ENCODE measurements at regions of chr14 and their contacts with region 1.

Region 1: GRCh38 chr14:93219103-93219726 is 12.2 kb downstream of the UBR7 start:
- DNase-seq: peak; percentile 51
- ATAC-seq: peak; percentile 88
- H3K4me3 ChIP-seq: no peak overlapping the region
- H3K27ac ChIP-seq: no peak overlapping the region
- H3K4me1 ChIP-seq: no peaks in the 10 kb centered on the region
- H3K27me3 ChIP-seq: no peaks in the 10 kb centered on the region
- CTCF ChIP-seq: peak; percentile 66 to 79 (median 74)
- POLR2A ChIP-seq: no peak
- RAD21 ChIP-seq: peak; percentile 77

Region 2: DNA sequence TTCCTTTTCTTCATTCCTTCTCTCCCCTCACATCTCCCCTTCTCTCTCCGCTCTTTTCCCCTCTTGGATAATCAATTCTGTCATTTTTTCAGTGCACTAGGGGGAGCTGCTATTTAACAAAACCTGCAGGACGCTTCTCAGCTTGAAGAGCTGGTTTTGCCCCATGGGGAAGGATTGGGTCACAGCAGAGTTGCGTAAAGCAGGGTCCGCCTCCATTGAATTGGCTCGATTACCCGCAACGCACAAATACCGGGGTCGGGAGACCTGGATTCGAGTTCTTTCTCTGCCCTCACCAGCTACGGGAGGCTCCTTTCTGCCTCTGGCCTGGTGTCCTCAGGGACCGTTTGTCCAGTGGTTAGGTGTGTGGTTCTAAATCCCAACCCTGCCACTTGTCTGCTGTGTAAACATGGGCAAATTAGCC is 338.3 kb before region 1 on chr14:
- CTCF ChIA-PET with region 1: interaction called, 5 read pairs
- POLR2A ChIA-PET with region 1: no interaction called
- RAD21 ChIA-PET with region 1: no interaction called
- intact Hi-C with region 1: loop called (anchors 2 kb)
- DNase-seq: peak; percentile 22
- ATAC-seq: peak; percentile 90
- H3K4me3 ChIP-seq: no peak overlapping the region
- H3K27ac ChIP-seq: no peak overlapping the region
- H3K4me1 ChIP-seq: no peaks in the 10 kb centered on the region; a peak in 2 of 4 replicates
- H3K27me3 ChIP-seq: peaks cover 4% of the 10 kb centered on the region
- CTCF ChIP-seq: peak; percentile 49 to 69 (median 55); a peak in 5 of 6 replicates
- POLR2A ChIP-seq: no peak
- RAD21 ChIP-seq: peak; percentile 79

Region 3: GRCh38 chr14:93195316-93195999 is 23.8 kb before region 1 on chr14:
- CTCF ChIA-PET with region 1: no interaction called
- POLR2A ChIA-PET with region 1: no interaction called
- RAD21 ChIA-PET with region 1: no interaction called
- intact Hi-C with region 1: no loop called
- DNase-seq: no peak
- ATAC-seq: no peak
- H3K4me3 ChIP-seq: no peak overlapping the region
- H3K27ac ChIP-seq: no peak overlapping the region
- H3K4me1 ChIP-seq: no peaks in the 10 kb centered on the region
- H3K27me3 ChIP-seq: no peaks in the 10 kb centered on the region
- CTCF ChIP-seq: no peak
- POLR2A ChIP-seq: no peak
- RAD21 ChIP-seq: no peak

Region 4: DNA sequence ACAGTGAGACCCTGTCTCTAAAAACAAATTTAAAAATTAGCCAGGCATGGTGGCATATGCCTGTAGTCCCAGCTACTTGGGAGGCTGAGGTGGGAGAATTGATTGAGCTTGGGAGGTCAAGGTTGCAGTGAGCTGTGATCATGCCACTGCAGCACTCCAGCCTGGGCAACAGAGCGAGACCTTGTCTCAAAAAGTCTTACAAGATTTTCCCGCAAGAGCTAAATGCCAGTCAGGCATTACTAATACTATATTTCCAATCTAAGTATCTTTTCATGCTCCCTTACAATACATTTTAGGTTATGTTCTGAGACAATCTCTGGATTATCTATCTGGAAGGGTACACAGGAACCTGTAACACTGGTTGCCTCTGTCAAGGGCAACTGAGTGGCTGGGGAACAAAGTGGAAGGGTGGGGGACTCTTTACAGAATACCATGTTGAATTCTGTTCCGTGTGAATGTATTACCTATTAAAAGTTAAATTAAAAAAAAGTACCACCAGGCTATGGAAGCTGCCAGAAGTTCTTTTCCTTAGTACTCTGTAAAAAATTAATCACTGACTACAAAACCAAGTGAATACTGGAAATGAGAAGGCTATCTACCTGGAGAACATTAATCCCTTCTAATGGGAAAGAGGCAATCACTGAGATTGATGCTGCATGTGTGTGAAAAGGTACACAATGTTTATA is 57.0 kb after region 1 on chr14:
- CTCF ChIA-PET with region 1: no interaction called
- POLR2A ChIA-PET with region 1: no interaction called
- RAD21 ChIA-PET with region 1: no interaction called
- intact Hi-C with region 1: no loop called
- DNase-seq: no peak
- ATAC-seq: no peak
- H3K4me3 ChIP-seq: no peak overlapping the region
- H3K27ac ChIP-seq: no peak overlapping the region
- H3K4me1 ChIP-seq: peaks cover 5 to 8% of the 10 kb centered on the region in 2 experiments; a peak in 3 of 4 replicates
- H3K27me3 ChIP-seq: no peaks in the 10 kb centered on the region
- CTCF ChIP-seq: no peak
- POLR2A ChIP-seq: no peak
- RAD21 ChIP-seq: no peak

Region 5: DNA sequence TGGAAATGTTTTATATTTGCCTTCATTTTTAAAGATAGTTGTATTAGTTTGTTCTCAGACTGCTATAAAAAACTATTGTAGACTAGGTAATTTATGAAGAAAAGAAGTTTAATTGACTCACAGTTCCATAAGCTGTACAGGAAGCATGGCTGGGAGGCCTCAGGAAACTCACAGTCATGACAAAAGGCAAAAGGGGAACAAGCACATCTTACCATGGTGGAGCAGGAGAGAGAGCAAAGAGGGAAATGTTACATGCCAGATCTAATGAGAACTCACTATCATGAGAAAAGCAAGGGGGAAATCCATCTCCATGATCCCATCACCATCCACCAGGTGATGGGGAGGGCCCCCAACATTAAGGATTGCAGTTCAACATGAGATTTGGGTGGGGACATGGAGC is 176.0 kb after region 1 on chr14:
- CTCF ChIA-PET with region 1: no interaction called
- POLR2A ChIA-PET with region 1: no interaction called
- RAD21 ChIA-PET with region 1: no interaction called
- intact Hi-C with region 1: no loop called
- DNase-seq: no peak
- ATAC-seq: no peak
- H3K4me3 ChIP-seq: no peak overlapping the region
- H3K27ac ChIP-seq: no peak overlapping the region
- H3K4me1 ChIP-seq: no peaks in the 10 kb centered on the region
- H3K27me3 ChIP-seq: 0 out of 2 replicates have a peak, but pooled peaks cover 4% of the 10 kb centered on the region
- CTCF ChIP-seq: no peak
- POLR2A ChIP-seq: no peak
- RAD21 ChIP-seq: no peak

Measured in HCT116 (cell line).